ENCODE measurements at regions of chr1 and their contacts with region 1.

Region 1: DNA sequence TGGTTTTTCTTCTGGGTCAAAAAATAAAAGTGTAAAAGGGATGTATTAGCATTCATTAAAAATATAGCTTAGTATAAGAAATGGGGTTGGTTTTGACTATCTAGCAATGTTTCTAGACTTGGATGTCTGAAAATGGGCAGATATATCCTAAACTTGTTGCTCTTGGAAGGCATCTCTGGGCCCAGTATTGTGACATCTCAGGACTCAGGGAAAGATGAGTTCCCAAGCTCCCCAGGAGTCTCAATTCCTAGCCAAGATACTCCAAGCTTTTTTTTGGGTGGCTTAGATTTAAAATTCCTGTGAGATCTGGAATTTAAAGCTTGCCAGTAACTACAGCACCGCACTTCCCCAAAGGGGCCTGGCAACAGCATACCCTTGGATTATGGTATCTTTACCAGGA is 11.5 kb upstream of the HSD17B7 start:
- ATAC-seq: no peak
- H3K4me3 ChIP-seq: no peak overlapping the region
- H3K27ac ChIP-seq: no peak overlapping the region
- H3K4me1 ChIP-seq: no peaks in the 10 kb centered on the region

Region 2: GRCh38 chr1:162605225-162605927 is 173.7 kb before region 1 on chr1:
- in situ Hi-C with region 1: loop called in 1 of 9 experiments (anchors 25 kb)
- ATAC-seq: peak in 2 of 8 experiments; percentile 35 to 51
- H3K4me3 ChIP-seq: no peak overlapping the region
- H3K27ac ChIP-seq: no peak overlapping the region
- H3K4me1 ChIP-seq: no peaks in the 10 kb centered on the region

Region 3: GRCh38 chr1:162678439-162678838 is 100.6 kb before region 1 on chr1:
- in situ Hi-C with region 1: no loop called
- ATAC-seq: peak in 2 of 8 experiments; percentile 20 to 42
- H3K4me3 ChIP-seq: no peak overlapping the region
- H3K27ac ChIP-seq: no peak overlapping the region
- H3K4me1 ChIP-seq: peaks cover 6 to 8% of the 10 kb centered on the region in 2 donors